CD4-positive, alpha-beta T cell (primary cell): ENCODE measurements at regions of chr16 and their contacts with region 1.

Region 1: GRCh38 chr16:352547-353403 is at the start of gene AXIN1:
- DNase-seq: peak; percentile 98 to 100 (median 100)
- ATAC-seq: peak; percentile 86
- H3K4me3 ChIP-seq: peak within 1 kb of the TSS; percentile 57
- H3K4me3 Mint-ChIP-seq: peak within 1 kb of the TSS; percentile 99
- H3K27ac ChIP-seq: peak within 1 kb of the TSS; percentile 35 to 50
- H3K27ac Mint-ChIP-seq: peak within 1 kb of the TSS; percentile 94
- H3K4me1 ChIP-seq: peaks cover 74% of the 10 kb centered on the region
- H3K4me1 Mint-ChIP-seq: peaks cover 61% of the 10 kb centered on the region
- H3K27me3 ChIP-seq: no peaks in the 10 kb centered on the region
- H3K27me3 Mint-ChIP-seq: no peaks in the 10 kb centered on the region
- CTCF ChIP-seq: no peak
- total RNA-seq, gene AXIN1: 24.7 to 26.3 TPM

Region 2: DNA sequence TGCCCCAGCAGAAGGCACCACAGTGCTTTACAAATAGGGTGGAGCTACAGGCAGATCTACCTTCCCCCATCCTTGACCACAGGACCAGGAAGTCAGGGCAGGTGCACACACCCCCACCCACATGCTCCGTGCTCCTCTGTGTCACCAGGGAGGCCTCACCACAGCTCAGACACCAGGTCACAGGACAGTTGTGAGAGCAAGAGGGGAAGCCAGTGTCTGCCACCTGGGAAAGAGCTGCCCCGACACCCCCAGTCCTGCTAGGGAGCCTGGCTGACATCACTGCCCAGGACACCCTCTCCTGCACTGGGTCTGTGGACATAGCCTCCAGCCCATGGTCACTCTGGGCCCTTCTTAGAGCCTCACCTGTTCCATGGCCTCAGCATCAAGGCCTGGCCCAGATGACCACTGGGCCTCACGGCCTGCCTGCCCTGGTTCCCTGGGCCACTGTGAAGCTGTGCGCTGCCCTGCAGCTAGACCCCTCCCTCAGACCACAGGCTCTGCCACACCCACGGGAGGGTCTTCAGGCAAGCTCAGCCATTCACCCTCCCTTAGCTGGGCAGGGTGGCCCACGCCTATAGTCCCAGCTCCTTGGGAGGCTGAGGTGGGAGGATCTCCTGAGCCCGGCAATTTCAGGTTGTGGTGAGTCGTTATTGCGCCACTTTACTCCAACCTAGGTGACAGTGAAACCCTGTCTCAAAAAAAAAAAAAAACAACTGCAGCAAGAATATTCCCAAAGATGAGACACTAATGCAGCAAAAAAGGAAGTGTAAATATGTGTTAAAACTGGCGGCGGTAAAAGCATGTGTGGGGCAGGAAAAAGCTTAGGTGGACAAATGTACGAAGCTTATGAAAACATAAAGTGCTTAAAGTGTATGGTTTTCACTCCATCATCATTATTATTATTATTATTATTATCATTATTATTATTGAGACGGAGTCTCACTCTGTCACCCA is 313.6 kb before region 1 on chr16:
- CTCF ChIA-PET with region 1: no interaction called
- POLR2A ChIA-PET with region 1: no interaction called
- intact Hi-C with region 1: no loop called
- DNase-seq: peak; percentile 18 to 84 (median 40)
- ATAC-seq: peak; percentile 93
- H3K4me3 ChIP-seq: no peak overlapping the region
- H3K4me3 Mint-ChIP-seq: no peak overlapping the region
- H3K27ac ChIP-seq: peak overlapping the region; percentile 5 to 46
- H3K27ac Mint-ChIP-seq: peak overlapping the region; percentile 70
- H3K4me1 ChIP-seq: peaks cover 33% of the 10 kb centered on the region
- H3K4me1 Mint-ChIP-seq: peaks cover 38% of the 10 kb centered on the region
- H3K27me3 ChIP-seq: no peaks in the 10 kb centered on the region
- H3K27me3 Mint-ChIP-seq: no peaks in the 10 kb centered on the region
- CTCF ChIP-seq: no peak

Region 3: GRCh38 chr16:138049-138417 is 214.7 kb before region 1 on chr16:
- CTCF ChIA-PET with region 1: no interaction called
- POLR2A ChIA-PET with region 1: no interaction called
- intact Hi-C with region 1: loop called in 1 of 2 experiments (anchors 2 kb)
- DNase-seq: peak in 12 of 14 experiments; percentile 7 to 56 (median 20)
- ATAC-seq: no peak
- H3K4me3 ChIP-seq: peak overlapping the region; percentile 66
- H3K4me3 Mint-ChIP-seq: peak overlapping the region; percentile 89
- H3K27ac ChIP-seq: peak overlapping the region in 1 of 2 donors; percentile 46
- H3K27ac Mint-ChIP-seq: peak overlapping the region; percentile 95
- H3K4me1 ChIP-seq: peaks cover 17% of the 10 kb centered on the region
- H3K4me1 Mint-ChIP-seq: peaks cover 25% of the 10 kb centered on the region
- H3K27me3 ChIP-seq: no peaks in the 10 kb centered on the region
- H3K27me3 Mint-ChIP-seq: no peaks in the 10 kb centered on the region
- CTCF ChIP-seq: no peak

Region 4: DNA sequence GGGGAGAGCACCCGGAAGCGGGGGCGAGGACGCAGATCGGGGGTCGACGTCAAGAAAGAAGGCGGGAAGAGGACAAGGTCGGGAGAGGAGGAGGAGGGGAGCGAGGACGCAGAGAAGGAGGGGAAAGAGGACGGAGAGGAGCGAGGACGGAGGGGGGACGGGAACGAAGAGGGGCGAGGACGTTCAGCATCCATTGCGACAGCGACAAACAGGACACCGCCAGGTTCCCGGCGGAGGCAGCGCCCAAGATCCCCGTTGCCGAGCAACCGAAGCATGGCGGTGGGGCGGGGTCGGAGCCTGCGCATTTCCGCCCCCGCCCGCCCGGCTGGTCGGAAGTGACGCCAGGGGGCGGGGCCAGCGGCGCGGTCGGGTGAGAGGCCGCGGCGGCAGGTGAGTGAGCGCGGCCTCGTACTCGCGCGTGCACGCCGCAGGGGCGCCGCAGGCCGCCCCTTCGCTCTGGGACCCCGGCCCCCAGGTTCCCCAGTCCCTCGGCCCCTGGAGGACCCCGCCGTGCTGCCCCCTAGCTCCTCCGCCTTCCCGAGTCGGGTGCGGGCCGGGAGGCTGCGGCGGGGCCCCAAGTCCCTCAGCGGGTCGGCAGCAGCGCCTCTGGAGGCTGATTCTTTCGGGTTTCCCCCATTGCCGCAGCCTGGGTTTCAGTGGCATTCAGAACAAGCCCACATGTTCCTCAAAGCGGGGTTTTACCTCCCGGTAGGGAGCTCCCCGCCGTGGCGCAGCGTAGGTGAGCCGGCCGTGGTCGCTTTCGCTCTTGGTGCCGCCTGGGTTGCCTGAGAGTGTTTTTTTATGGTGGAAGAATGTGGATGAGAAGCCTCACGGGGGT is 118.1 kb before region 1 on chr16 and contains the start of gene FAM234A:
- CTCF ChIA-PET with region 1: interaction called, 5 read pairs
- POLR2A ChIA-PET with region 1: interaction called, 12 read pairs
- intact Hi-C with region 1: loop called (anchors 1 to 2 kb)
- DNase-seq: peak; percentile 88 to 99 (median 94)
- ATAC-seq: peak; percentile 87
- H3K4me3 ChIP-seq: peak within 1 kb of the TSS; percentile 62
- H3K4me3 Mint-ChIP-seq: peak within 1 kb of the TSS; percentile 93
- H3K27ac ChIP-seq: peak within 1 kb of the TSS; percentile 98
- H3K27ac Mint-ChIP-seq: peak within 1 kb of the TSS; percentile 100
- H3K4me1 ChIP-seq: peaks cover 20% of the 10 kb centered on the region
- H3K4me1 Mint-ChIP-seq: peaks cover 17% of the 10 kb centered on the region
- H3K27me3 ChIP-seq: no peaks in the 10 kb centered on the region
- H3K27me3 Mint-ChIP-seq: no peaks in the 10 kb centered on the region
- CTCF ChIP-seq: peak; percentile 63
- total RNA-seq, gene FAM234A: 15.6 to 17.0 TPM

Region 5: DNA sequence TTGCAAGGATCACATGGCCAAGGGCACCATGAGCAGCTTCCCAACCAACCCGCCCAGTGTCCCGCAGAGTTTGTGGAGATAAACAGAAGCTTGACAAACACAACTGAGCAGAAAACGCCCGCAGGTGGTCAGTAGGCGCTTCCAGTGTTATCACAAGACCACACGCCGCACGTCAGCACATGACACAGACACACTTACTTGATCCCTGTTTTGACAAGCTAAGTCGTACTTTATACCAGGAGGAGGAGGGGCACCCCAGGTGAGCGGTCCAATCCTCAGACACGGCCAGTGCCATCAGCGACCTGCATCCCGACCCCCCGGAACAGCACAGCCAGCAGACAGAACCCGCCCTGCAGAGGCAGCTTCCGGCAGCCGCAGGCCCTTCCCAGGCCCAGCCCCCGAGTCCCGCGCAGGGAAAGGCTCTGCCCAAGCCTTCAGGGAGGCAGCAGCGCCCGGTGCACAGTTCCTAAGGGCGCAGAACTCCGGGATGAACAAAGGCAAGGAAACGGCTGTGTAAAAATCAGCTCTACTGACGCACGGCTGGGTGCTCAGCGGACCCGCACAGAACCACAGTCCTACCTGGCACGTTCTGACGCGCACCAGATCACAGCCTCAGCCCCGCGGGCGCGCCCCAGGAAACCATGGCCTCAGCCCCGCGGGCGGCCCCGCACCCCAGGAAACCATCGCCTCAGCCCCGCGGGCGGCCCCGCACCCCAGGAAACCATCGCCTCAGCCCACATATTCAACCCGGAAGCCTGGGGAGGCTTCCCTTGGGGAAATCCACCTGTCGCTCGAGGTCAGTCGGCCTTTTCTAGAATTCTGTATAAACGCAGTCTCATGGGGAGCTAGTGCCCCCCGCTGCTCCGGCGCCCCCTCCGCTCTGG is 28.1 kb before region 1 on chr16:
- CTCF ChIA-PET with region 1: interaction called, 3 read pairs
- POLR2A ChIA-PET with region 1: interaction called, 18 read pairs
- intact Hi-C with region 1: loop called in 1 of 2 experiments (anchors 2 kb)
- DNase-seq: peak; percentile 56 to 94 (median 72)
- ATAC-seq: peak; percentile 80
- H3K4me3 ChIP-seq: peak overlapping the region; percentile 57
- H3K4me3 Mint-ChIP-seq: peak overlapping the region; percentile 77
- H3K27ac ChIP-seq: peak overlapping the region; percentile 77 to 89
- H3K27ac Mint-ChIP-seq: peak overlapping the region; percentile 90
- H3K4me1 ChIP-seq: peaks cover 80% of the 10 kb centered on the region
- H3K4me1 Mint-ChIP-seq: peaks cover 60% of the 10 kb centered on the region
- H3K27me3 ChIP-seq: no peaks in the 10 kb centered on the region
- H3K27me3 Mint-ChIP-seq: no peaks in the 10 kb centered on the region
- CTCF ChIP-seq: no peak

Region 6: DNA sequence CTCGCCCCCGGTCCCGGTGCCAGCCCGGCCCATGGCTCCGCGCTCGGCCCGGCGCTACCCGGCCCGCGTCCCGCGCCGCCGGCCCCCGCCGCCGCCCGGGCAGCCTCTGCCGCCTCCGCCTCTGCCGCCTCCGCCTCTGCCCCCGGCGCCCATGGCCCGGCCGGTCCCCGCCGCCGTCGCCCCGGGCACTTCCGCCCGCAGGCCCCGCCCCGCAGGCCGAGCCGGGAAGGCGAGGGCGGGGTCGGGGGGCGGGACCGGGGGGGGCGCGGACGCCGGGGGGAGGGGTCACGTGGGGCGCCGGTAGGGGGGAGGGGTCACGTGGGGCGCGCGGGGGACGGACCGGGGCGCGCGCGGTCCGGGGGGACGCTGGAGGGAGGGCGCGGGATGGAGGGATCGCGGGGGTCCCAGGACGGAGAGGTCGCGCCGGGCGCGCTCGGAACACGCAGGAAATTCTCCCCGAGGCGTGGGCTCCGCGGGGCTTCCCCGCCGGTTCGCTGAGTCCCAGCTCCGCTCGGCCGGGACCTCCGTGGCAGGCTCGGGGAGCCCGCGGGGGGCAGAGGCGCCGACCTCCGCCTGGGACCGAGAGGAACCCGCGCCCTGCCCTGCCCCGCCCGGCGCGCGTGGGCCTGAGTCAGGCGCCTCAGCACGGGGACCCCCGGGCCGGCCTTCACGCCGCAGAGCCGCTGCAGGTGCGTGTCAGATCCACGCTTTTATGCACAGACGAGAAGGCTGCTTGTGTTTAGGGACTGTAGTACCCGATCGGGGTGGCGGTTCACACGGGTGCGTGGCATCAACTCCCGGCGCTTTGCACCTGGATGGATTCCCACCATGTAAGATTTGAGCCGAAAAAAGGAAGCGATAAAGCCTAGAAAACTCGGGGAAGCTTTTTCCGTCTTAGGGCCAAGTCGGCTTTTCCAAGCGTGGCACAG is 29.3 kb after region 1 on chr16 and contains the start of gene PGAP6:
- CTCF ChIA-PET with region 1: no interaction called
- POLR2A ChIA-PET with region 1: interaction called, 19 read pairs
- intact Hi-C with region 1: loop called in 1 of 2 experiments (anchors 1 kb)
- DNase-seq: peak in 12 of 14 experiments; percentile 35 to 87 (median 71)
- ATAC-seq: peak; percentile 42
- H3K4me3 ChIP-seq: peak within 1 kb of the TSS; percentile 73
- H3K4me3 Mint-ChIP-seq: peak within 1 kb of the TSS; percentile 84
- H3K27ac ChIP-seq: peak within 1 kb of the TSS in 1 of 2 donors; percentile 64
- H3K27ac Mint-ChIP-seq: peak within 1 kb of the TSS; percentile 98
- H3K4me1 ChIP-seq: peaks cover 53% of the 10 kb centered on the region
- H3K4me1 Mint-ChIP-seq: peaks cover 26% of the 10 kb centered on the region
- H3K27me3 ChIP-seq: no peaks in the 10 kb centered on the region
- H3K27me3 Mint-ChIP-seq: no peaks in the 10 kb centered on the region
- CTCF ChIP-seq: no peak
- total RNA-seq, gene PGAP6: 59.7 to 63.7 TPM

Region 7: DNA sequence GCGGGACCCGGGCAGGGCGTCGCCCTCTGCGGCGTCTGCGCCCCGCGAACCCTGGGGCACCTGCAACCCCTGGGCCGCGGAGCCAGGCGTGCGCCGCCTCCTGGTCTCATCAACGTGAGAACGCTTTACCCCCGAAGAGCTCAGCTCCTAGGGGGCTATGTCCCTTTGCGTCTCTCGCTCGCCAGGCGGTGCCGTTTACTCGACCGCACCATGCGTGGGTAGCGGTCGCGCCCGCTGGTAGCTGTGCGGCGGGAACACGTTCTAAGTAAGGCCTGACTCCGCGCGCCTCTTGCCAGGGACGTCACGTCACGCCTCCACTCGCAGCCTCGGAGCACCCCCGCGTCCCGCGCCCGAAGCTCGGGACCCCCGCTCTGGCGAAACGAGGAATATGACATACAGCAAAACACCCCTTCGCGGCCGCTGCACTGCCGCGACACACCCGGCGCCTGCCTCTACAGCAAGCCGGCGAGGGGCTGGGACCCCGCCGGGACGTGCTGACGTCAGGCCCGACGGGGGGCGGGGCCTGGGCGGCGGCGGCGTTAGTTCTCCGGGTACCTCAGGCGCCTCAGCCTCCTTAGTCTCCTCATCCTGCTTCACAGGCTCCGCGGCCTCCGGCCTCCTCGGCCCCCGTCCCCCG is 72.4 kb after region 1 on chr16 and contains the start of gene RAB11FIP3:
- CTCF ChIA-PET with region 1: no interaction called
- POLR2A ChIA-PET with region 1: no interaction called
- intact Hi-C with region 1: loop called (anchors 2 to 5 kb)
- DNase-seq: peak; percentile 65 to 91 (median 84)
- ATAC-seq: peak; percentile 89
- H3K4me3 ChIP-seq: peak within 1 kb of the TSS; percentile 72
- H3K4me3 Mint-ChIP-seq: peak within 1 kb of the TSS; percentile 95
- H3K27ac ChIP-seq: peak within 1 kb of the TSS; percentile 70 to 84
- H3K27ac Mint-ChIP-seq: peak within 1 kb of the TSS; percentile 93
- H3K4me1 ChIP-seq: peaks cover 34% of the 10 kb centered on the region
- H3K4me1 Mint-ChIP-seq: peaks cover 38% of the 10 kb centered on the region
- H3K27me3 ChIP-seq: no peaks in the 10 kb centered on the region
- H3K27me3 Mint-ChIP-seq: no peaks in the 10 kb centered on the region
- CTCF ChIP-seq: peak; percentile 21
- total RNA-seq, gene RAB11FIP3: 28.4 to 29.0 TPM